ENCODE measurements at regions of chr5 and their contacts with region 1.

Region 1: DNA sequence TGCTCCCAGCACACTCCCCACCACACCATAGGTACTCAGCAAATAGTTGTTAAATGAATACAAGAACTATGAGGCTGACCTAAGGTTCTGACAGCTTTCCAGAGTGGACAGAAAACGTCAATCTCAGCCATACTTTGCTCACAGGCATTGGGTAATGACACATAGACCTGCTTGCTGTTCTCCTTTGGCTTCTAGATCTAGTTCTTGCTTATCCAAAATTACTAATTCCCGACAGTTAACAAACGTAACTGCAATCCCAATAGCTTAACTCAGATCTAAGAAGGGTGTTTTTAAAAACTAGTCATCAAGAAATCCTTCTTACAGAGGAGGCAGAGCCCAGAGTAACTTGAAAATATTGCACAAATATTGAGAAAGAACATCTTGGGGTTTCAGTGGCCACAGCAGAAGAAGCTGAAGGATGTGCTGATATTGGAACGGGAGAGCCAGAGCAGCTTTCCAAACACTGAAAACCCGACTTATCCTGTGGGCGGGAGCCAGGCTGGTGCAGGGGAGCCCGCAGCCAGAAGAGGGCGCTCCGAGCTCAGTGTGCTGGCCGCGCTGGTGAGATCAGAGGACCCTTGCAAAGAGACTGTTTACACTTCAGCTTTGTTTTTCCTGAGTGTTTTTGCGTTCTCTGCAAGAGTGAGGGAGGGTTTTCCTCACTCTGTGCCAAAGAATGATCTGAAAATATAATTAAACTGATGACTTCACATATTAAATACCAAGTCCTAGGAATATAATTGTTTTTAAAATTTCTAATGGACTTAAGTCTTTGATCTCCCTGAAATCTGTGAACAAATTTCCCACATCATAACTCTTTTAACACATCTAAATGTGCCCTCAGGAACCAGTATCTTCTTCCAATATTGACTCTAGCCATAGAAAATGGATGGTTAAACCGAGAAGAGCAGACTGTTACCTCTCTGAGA is 30.3 kb downstream of the FGF1 start:
- DNase-seq: peak; percentile 87
- H3K27ac ChIP-seq: no peak overlapping the region
- CTCF ChIP-seq: peak; percentile 100

Region 2: DNA sequence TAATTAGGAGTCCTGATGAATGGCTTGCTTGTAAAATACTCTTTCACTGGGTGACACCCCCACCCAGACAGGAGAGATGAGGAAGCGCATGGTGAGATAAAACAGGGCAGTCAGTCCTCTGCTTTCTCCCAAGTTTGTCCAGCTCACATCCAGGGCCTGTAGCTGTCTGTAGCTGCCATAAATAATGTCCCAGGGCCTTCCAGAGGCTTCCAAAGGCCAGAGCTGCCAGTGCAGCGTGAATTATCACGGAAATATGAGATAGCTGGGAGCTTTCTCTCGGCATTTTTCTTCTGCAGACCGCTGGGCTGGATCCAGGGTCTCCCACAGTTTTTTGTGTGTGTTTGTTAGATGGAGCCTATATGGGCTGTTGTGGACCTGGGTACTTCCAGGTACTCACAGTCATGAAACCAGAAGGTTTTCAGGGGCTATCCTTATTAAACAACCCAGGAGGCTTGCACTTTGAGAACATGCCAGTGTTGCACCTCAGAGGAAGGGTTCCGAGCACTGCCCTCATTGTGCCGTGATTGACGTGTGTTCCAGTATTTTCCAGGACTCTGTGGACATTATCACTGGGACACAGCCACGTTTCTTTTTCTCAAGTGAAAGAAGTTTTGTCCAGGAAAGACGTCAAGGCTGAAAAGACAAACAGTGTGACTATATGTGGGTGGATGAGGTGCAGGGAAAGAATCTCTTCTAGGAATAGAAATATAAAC is 87.2 kb before region 1 on chr5:
- CTCF ChIA-PET with region 1: no interaction called
- POLR2A ChIA-PET with region 1: no interaction called
- DNase-seq: no peak
- H3K27ac ChIP-seq: no peak overlapping the region
- CTCF ChIP-seq: no peak

Region 3: DNA sequence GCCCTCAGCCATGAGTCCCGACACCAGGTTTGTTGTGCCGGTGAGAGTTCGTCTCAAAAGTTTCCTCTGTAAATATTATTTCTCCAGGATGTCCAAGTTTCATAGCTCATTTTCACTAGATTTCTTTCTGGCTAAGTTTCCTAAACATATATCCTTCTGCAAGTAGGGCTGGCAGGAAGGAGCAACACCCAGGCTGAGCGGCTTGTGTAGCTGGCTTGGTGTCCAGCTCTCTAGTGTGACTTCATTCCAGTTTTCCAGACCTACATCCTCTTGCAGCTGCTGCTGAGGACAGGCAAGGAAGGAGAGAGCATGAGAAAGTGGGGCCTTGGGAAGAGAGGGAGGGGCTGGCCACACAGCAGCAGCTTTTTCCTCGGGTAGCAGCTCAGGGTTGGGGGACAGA is 50.0 kb before region 1 on chr5:
- CTCF ChIA-PET with region 1: interaction called, 19 read pairs
- POLR2A ChIA-PET with region 1: no interaction called
- DNase-seq: no peak
- H3K27ac ChIP-seq: no peak overlapping the region
- CTCF ChIP-seq: no peak

Region 4: GRCh38 chr5:142621227-142621626 is 34.4 kb before region 1 on chr5:
- CTCF ChIA-PET with region 1: interaction called, 14 read pairs
- POLR2A ChIA-PET with region 1: no interaction called
- DNase-seq: peak; percentile 41
- H3K27ac ChIP-seq: no peak overlapping the region
- CTCF ChIP-seq: no peak

Region 5: GRCh38 chr5:142644640-142645361 is 10.8 kb before region 1 on chr5:
- CTCF ChIA-PET with region 1: interaction called, 18 read pairs
- POLR2A ChIA-PET with region 1: no interaction called
- DNase-seq: peak; percentile 99
- H3K27ac ChIP-seq: peak overlapping the region; percentile 94
- CTCF ChIP-seq: no peak

Region 6: DNA sequence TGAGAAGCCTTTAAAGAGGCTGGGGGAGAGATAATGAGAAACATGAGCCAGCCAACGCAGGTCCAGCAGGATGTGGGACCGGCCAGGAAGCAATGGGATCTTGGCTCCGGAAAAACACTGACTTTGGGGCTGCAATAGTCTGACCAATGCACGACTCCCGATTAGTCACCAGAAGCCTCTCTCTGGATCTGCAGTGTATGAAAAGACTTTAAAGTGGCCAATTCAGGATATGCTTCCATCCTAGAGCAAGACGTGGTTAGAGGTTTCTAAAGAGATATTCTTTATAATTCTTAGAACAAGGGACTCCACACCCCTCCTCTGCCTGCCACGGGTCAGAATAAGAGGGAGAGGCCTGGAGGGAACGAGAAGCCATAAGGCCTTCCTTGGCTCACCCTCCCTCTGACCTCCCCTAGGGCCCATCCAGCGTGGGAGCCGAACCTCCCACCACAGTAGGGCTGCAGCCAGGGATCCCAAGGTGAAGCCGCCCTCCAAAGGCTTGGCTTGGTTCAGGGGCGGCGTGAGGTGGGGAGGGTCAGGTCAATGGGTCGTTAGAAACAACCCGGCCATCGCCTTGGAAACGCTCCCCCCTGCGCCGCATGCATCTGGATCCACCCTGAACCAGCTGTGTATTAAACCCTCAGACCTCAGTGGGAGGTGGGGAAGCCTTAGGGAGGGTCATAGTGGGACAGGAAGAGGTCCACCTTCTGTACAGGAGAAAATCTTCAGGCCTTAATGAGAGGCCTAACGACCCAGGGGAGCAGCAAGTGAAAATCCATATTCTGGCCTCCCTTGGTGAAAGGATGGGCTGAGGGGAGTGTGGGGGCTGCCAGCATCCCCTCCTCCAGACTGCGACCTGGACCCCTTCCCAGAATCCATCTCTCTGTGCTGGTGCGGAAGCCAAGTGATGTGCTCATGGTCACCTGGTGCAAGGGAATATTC is 19.2 kb after region 1 on chr5:
- CTCF ChIA-PET with region 1: interaction called, 19 read pairs
- POLR2A ChIA-PET with region 1: interaction called, 13 read pairs
- DNase-seq: peak; percentile 49
- H3K27ac ChIP-seq: peak overlapping the region; percentile 56
- CTCF ChIP-seq: no peak

Region 7: DNA sequence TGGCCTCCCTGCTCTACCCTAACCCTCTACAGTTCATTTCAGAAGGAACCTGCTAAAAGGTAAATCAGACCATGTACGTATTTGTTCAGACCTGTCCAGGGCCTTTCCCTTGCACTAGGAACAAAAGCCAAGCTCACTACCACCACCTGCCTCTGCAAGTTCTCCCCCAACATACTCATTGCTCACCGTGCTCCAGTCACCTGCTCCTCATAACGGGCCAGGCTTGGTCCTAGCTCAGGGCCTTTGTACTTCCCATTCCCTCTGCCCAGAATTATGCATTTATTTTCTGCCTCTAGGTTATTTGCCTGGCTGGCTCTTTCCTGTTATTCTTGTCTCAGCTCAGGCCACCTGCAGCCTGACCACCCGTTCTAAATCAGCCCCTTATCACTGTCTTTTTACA is 35.1 kb after region 1 on chr5:
- CTCF ChIA-PET with region 1: interaction called, 154 read pairs
- POLR2A ChIA-PET with region 1: no interaction called
- DNase-seq: peak; percentile 68
- H3K27ac ChIP-seq: no peak overlapping the region
- CTCF ChIP-seq: no peak

Region 8: DNA sequence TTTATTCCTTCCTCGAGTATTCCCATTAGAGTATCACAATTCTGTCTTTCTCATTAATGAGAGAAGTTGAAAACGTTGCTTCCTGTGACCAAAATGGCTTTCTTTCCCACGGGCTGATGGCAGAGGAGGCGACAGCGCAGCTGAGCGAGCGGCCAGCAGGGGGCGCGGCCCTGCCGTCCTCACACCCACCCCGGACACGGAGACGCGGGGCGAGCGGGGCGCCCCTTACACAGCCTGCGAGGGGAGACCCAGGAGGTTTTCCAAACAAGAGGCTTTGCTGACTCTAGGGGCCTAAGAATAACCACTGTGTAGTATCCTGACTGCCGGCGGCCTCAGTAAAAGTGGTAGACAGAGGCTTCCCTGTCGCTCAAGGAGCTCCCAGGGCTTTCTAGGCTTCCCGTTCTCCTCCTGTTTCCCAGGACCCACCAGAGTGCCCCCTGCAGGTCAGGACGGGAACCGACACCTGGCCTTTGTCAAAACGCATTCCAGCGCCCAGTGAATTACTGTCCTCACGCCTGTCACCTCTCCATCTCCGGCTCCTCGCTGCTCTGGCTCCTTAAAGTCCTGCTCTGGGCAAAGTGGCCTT is 57.6 kb after region 1 on chr5:
- CTCF ChIA-PET with region 1: interaction called, 34 read pairs
- POLR2A ChIA-PET with region 1: no interaction called
- DNase-seq: peak; percentile 72
- H3K27ac ChIP-seq: peak overlapping the region; percentile 54
- CTCF ChIP-seq: peak; percentile 100